ENCODE measurements at regions of chr4 and their contacts with region 1.

Region 1: GRCh38 chr4:11548597-11549082 is 119.9 kb upstream of the HS3ST1 start:
- DNase-seq: peak; percentile 73
- H3K4me3 ChIP-seq: no peak overlapping the region
- H3K27ac ChIP-seq: peak overlapping the region; percentile 87
- H3K4me1 ChIP-seq: peaks cover 58% of the 10 kb centered on the region
- H3K27me3 ChIP-seq: no peaks in the 10 kb centered on the region
- CTCF ChIP-seq: no peak
- POLR2A ChIP-seq: no peak

Region 2: DNA sequence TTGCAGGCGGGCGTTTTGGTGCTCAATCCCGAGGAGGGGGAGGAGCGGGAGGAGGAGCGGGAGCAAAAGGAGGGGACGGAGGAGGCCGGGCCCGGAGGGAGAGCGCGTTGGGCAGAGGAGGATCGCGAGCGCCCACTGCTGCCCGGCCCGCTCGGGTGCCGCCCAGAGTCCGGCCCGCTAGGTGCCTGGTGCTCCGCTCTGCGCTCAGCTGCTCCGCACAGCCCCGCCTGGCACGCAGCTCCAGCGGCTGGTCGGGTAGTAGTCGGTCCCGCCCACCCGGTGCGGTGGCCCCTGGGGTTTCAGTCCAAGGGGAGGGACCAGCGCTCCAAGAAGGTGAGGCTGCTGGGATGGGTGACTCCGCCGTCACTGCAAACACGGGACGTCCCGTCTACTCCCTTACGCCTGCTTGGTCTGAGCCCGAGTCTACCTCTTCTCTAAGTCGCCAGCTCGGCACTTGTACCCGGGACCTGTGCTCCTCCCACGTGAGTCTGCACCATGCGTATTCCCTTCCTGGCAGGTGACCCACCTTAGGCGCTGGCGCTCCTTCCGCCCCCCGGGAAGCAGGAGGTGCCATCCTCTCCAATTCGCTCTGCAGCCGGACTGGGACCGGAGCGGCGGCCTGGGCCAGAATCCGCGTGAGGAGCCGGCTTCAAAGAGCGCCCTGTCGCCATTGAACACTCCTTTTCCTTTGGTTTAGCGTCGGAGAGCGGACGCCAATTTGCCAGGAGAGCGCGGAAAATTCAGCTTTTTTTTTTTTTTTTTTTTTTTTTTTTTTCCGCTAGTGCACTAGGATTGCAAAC is 119.5 kb before region 1 on chr4:
- CTCF ChIA-PET with region 1: interaction called, 9 read pairs
- POLR2A ChIA-PET with region 1: no interaction called
- dilution Hi-C with region 1: no loop called
- intact Hi-C with region 1: loop called (anchors 1 kb)
- DNase-seq: peak; percentile 75
- H3K4me3 ChIP-seq: peak overlapping the region; percentile 56 to 75 (median 72)
- H3K27ac ChIP-seq: no peak overlapping the region
- H3K4me1 ChIP-seq: peaks cover 23% of the 10 kb centered on the region
- H3K27me3 ChIP-seq: peaks cover 10 to 13% of the 10 kb centered on the region in 2 experiments
- CTCF ChIP-seq: peak; percentile 65 to 89
- POLR2A ChIP-seq: no peak

Region 3: DNA sequence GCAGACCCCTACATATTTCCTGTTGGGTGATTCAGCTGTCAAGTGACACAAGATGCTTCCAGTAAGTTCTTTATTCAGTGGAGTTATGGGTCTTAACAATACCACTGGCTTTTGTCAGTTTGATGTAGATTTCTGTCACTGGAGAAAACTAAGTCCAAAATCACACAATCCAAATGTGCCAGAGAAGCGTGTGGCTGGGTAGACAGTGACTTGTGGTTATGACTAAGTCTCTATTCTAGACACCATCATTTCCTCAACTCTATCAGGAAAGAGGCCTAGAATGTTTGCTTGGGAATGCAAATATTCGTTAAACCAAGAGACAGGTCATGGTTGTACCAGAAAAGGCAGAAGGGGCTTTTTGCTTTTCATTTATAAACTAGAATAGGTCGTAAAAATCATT is 65.6 kb before region 1 on chr4:
- CTCF ChIA-PET with region 1: interaction called, 4 read pairs
- POLR2A ChIA-PET with region 1: interaction called, 3 read pairs
- dilution Hi-C with region 1: no loop called
- intact Hi-C with region 1: loop called (anchors 2 kb)
- DNase-seq: peak; percentile 15
- H3K4me3 ChIP-seq: no peak overlapping the region
- H3K27ac ChIP-seq: peak overlapping the region; percentile 9
- H3K4me1 ChIP-seq: peaks cover 24% of the 10 kb centered on the region
- H3K27me3 ChIP-seq: no peaks in the 10 kb centered on the region
- CTCF ChIP-seq: no peak
- POLR2A ChIP-seq: no peak

Region 4: GRCh38 chr4:11566444-11567022 is 17.9 kb after region 1 on chr4:
- CTCF ChIA-PET with region 1: no interaction called
- POLR2A ChIA-PET with region 1: no interaction called
- dilution Hi-C with region 1: no loop called
- intact Hi-C with region 1: no loop called
- DNase-seq: no peak
- H3K4me3 ChIP-seq: no peak overlapping the region
- H3K27ac ChIP-seq: no peak overlapping the region
- H3K4me1 ChIP-seq: no peaks in the 10 kb centered on the region
- H3K27me3 ChIP-seq: no peaks in the 10 kb centered on the region
- CTCF ChIP-seq: no peak
- POLR2A ChIP-seq: no peak

Region 5: DNA sequence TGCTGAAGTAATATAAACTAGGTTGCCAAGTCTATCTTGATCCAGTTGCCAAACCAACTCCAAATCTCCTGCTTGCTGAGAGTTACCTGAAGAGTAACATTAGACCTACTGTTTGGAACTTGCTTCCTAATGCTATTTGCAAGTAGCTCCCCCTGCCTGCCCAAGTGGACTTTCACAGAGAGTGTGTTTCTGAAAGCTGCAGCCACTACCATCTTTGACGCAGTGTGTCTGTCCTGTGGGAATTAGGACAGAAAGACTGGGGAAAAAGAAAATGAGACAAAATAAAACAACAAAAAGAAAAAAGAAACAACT is 75.0 kb after region 1 on chr4:
- CTCF ChIA-PET with region 1: interaction called, 12 read pairs
- POLR2A ChIA-PET with region 1: no interaction called
- dilution Hi-C with region 1: no loop called
- intact Hi-C with region 1: no loop called
- DNase-seq: peak; percentile 45
- H3K4me3 ChIP-seq: no peak overlapping the region
- H3K27ac ChIP-seq: no peak overlapping the region
- H3K4me1 ChIP-seq: peaks cover 10% of the 10 kb centered on the region
- H3K27me3 ChIP-seq: no peaks in the 10 kb centered on the region
- CTCF ChIP-seq: peak; percentile 11 to 48
- POLR2A ChIP-seq: no peak

Region 6: GRCh38 chr4:11698846-11699590 is 150.4 kb after region 1 on chr4:
- CTCF ChIA-PET with region 1: no interaction called
- POLR2A ChIA-PET with region 1: no interaction called
- dilution Hi-C with region 1: no loop called
- intact Hi-C with region 1: loop called (anchors 1 kb)
- DNase-seq: peak; percentile 77
- H3K4me3 ChIP-seq: no peak overlapping the region
- H3K27ac ChIP-seq: peak overlapping the region; percentile 76
- H3K4me1 ChIP-seq: peaks cover 40% of the 10 kb centered on the region
- H3K27me3 ChIP-seq: no peaks in the 10 kb centered on the region
- CTCF ChIP-seq: no peak
- POLR2A ChIP-seq: peak; percentile 11

Region 7: GRCh38 chr4:11805842-11806241 is 257.2 kb after region 1 on chr4:
- CTCF ChIA-PET with region 1: no interaction called
- POLR2A ChIA-PET with region 1: no interaction called
- dilution Hi-C with region 1: no loop called
- intact Hi-C with region 1: loop called (anchors 2 kb)
- DNase-seq: peak; percentile 81
- H3K4me3 ChIP-seq: no peak overlapping the region
- H3K27ac ChIP-seq: peak overlapping the region; percentile 45
- H3K4me1 ChIP-seq: peaks cover 21% of the 10 kb centered on the region
- H3K27me3 ChIP-seq: no peaks in the 10 kb centered on the region
- CTCF ChIP-seq: peak; percentile 58 to 65
- POLR2A ChIP-seq: no peak